Spleen (tissue), 13 donors: ENCODE measurements at regions of chr1 and their contacts with region 1.

Region 1: DNA sequence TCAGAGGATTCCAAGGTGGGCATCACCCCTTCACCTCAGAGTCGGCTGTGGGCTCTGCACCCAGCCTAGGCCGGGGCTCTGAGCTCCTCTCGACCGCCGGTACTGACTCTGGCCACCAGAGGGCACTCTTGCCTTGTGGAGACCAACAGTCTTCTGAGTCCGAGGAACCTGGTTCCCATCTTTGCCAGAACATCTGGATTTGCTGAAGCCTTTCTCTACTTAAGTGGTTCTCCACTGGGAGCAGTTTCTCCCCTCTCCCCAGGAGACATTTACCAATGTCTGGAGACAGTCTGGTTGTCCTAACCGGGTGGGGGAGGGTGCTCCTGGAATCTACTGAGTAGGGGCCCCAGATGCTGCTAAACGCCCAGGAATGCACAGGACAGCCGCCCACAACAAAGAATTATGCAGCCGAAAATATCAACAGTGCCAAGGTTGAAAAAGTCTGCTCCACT is 9.4 kb downstream of the ETV3L start:
- DNase-seq: peak; percentile 95
- H3K4me3 ChIP-seq: no peak overlapping the region
- H3K27ac ChIP-seq: no peak overlapping the region
- H3K4me1 ChIP-seq: peaks cover 0 to 10% (median 4%) of the 10 kb centered on the region in 6 donors
- H3K27me3 ChIP-seq: peaks cover 0 to 15% (median 0%) of the 10 kb centered on the region in 7 donors
- CTCF ChIP-seq: peak; percentile 81 to 96 (median 93)
- POLR2A ChIP-seq: no peak

Region 2: GRCh38 chr1:157156058-157156541 is 65.9 kb after region 1 on chr1:
- intact Hi-C with region 1: loop called (anchors 1 kb)
- DNase-seq: peak; percentile 93
- H3K4me3 ChIP-seq: peak overlapping the region in 2 of 8 donors; percentile 3 to 40
- H3K27ac ChIP-seq: peak overlapping the region in 2 of 8 donors; percentile 41 to 53
- H3K4me1 ChIP-seq: peaks cover 23 to 41% (median 31%) of the 10 kb centered on the region in 6 donors
- H3K27me3 ChIP-seq: peaks cover 0 to 25% (median 0%) of the 10 kb centered on the region in 7 donors
- CTCF ChIP-seq: peak; percentile 88 to 97 (median 95)
- POLR2A ChIP-seq: no peak

Region 3: DNA sequence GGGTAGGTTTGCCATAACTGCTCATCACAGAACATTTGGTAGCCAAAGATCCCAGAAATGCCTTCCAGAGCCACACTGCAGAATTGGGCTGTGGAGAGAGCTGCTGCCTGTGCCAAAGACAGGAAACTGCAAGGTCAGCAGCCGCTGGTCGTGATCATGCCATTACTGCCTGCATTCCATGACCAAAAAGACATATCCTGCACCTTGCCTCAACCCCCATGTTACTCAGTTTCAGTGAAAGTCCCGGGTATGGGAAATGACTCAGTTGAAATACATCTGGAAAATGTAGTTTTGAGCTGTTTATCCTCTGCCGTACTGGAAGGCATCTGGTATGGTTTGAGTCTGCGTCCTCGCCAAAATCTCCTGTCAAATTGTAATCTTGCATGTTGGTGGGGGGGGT is 300.4 kb after region 1 on chr1:
- intact Hi-C with region 1: no loop called
- DNase-seq: no peak
- H3K4me3 ChIP-seq: no peak overlapping the region
- H3K27ac ChIP-seq: no peak overlapping the region
- H3K4me1 ChIP-seq: no peaks in the 10 kb centered on the region
- H3K27me3 ChIP-seq: peaks cover 0 to 16% (median 0%) of the 10 kb centered on the region in 7 donors
- CTCF ChIP-seq: no peak
- POLR2A ChIP-seq: no peak

Region 4: GRCh38 chr1:157429601-157430240 is 339.5 kb after region 1 on chr1:
- intact Hi-C with region 1: no loop called
- DNase-seq: no peak
- H3K4me3 ChIP-seq: no peak overlapping the region
- H3K27ac ChIP-seq: no peak overlapping the region
- H3K4me1 ChIP-seq: peaks cover 0 to 7% (median 0%) of the 10 kb centered on the region in 6 donors
- H3K27me3 ChIP-seq: peaks cover 0 to 4% (median 0%) of the 10 kb centered on the region in 7 donors
- CTCF ChIP-seq: no peak
- POLR2A ChIP-seq: no peak